Activated CD8-positive, alpha-beta T cell treated with anti-CD3 and anti-CD28 coated beads for 36 hours (primary cell): ENCODE measurements at regions of chr16 and their contacts with region 1.

Region 1: GRCh38 chr16:9072806-9073341 is 18.6 kb upstream of the HAPSTR1 start:
- DNase-seq: peak; percentile 74
- ATAC-seq: peak; percentile 62
- H3K4me3 Mint-ChIP-seq: peak overlapping the region; percentile 57
- H3K27ac Mint-ChIP-seq: peak overlapping the region; percentile 98
- H3K4me1 Mint-ChIP-seq: peaks cover 54% of the 10 kb centered on the region
- H3K27me3 Mint-ChIP-seq: peaks cover 2% of the 10 kb centered on the region
- CTCF ChIP-seq: no peak

Region 2: GRCh38 chr16:9047686-9048301 is 25.1 kb before region 1 on chr16:
- CTCF ChIA-PET with region 1: interaction called, 8 read pairs
- POLR2A ChIA-PET with region 1: interaction called, 11 read pairs
- intact Hi-C with region 1: no loop called
- DNase-seq: peak; percentile 76
- ATAC-seq: peak; percentile 63
- H3K4me3 Mint-ChIP-seq: no peak overlapping the region
- H3K27ac Mint-ChIP-seq: peak overlapping the region; percentile 67
- H3K4me1 Mint-ChIP-seq: peaks cover 33% of the 10 kb centered on the region
- H3K27me3 Mint-ChIP-seq: no peaks in the 10 kb centered on the region
- CTCF ChIP-seq: no peak